ENCODE measurements at regions of chr11 and their contacts with region 1.

Region 1: DNA sequence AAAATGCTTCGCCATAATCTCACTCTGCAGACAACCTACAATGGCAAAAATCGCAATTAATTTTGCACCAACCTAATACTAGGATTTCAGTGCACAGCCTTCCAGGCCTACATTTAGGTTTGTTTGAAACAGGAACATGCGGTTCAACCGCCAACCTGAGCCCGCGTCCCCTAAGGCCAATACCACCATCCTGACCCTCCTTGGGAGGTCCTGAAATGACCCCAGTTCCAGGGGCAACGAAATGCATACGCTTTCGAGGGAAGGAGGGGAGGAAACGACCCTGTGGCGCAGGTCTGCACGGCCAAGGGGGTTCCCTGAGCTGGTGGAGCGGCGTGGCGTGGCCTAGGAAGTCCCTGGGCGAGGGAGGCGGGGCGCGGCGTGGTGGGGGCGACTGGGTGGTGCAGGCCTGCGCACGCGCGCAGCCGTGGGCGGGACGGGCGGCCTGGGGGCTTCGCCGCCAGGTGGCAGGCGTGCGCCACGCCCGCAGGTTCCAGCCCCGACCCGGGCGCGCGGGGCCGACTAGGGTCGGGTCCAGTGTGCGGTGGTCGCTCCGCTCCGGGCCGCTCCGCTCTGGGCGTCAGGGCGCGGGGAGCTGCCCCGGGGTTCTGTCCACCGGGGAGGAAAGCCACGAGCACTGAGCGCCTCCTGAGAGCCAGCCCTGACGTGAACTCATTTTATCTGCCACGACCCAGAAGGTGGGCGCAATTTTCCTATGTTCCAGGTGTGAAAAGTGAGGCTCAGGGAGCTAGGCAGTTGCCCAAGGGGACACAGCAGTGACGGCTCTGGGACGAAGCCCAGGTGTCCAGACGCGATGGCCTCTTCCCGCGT is 94.1 kb downstream of the SWAP70 start:
- DNase-seq: peak; percentile 89
- H3K4me3 ChIP-seq: peak overlapping the region; percentile 64 to 90
- H3K27ac ChIP-seq: peak overlapping the region; percentile 89 to 97
- H3K4me1 ChIP-seq: peaks cover 23% of the 10 kb centered on the region
- H3K27me3 ChIP-seq: no peaks in the 10 kb centered on the region
- CTCF ChIP-seq: peak; percentile 80 to 97 (median 88)
- POLR2A ChIP-seq: no peak

Region 2: GRCh38 chr11:9716275-9717039 is 41.6 kb before region 1 on chr11:
- intact Hi-C with region 1: no loop called
- DNase-seq: peak; percentile 27
- H3K4me3 ChIP-seq: no peak overlapping the region
- H3K27ac ChIP-seq: peak overlapping the region in 1 of 2 donors; percentile 53
- H3K4me1 ChIP-seq: peaks cover 14% of the 10 kb centered on the region
- H3K27me3 ChIP-seq: no peaks in the 10 kb centered on the region
- CTCF ChIP-seq: no peak
- POLR2A ChIP-seq: no peak

Region 3: GRCh38 chr11:9972989-9973388 is 215.0 kb after region 1 on chr11:
- intact Hi-C with region 1: loop called (anchors 10 kb)
- DNase-seq: peak; percentile 37
- H3K4me3 ChIP-seq: no peak overlapping the region
- H3K27ac ChIP-seq: no peak overlapping the region
- H3K4me1 ChIP-seq: no peaks in the 10 kb centered on the region
- H3K27me3 ChIP-seq: no peaks in the 10 kb centered on the region
- CTCF ChIP-seq: peak; percentile 29 to 60 (median 60)
- POLR2A ChIP-seq: no peak

Region 4: DNA sequence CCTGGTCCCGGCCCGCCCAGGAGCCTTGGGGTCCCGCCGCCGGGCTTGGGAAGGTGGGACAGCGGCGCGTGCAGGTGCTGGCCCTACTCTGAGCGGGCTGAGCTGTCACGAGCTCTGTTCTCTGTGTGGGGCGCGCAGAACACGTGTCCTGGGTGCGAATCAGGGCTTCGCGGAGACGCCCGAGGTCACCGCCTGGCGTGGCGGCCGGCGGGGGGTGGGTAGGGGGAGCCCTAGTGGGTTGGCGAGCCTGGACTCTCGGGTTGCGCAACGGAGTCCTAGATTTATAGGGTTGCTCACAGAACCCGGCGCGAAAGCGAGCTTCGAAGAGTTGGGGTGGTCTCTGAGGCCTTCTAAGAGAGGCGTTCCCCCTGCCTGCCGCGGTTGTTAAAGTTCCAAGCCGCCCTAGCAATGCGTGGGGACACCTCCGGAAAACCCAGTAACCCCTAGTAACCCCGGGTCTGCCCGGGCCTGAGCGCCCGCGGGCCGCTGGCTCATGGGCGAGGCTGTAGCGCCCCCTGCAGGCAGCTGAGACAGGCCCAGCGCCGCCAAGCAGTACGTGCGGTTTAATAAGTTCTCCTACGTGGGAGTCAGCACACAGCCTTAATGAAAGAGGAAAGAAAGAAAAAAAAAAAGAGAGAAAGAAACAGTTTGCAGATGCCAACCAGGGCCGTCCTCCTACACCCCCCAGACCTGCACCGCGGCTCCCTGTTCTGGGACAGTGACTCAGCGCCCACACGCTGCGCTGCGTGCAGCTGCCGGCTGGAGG is 549.6 kb after region 1 on chr11:
- intact Hi-C with region 1: loop called (anchors 5 kb)
- DNase-seq: peak; percentile 91
- H3K4me3 ChIP-seq: peak overlapping the region; percentile 46 to 66
- H3K27ac ChIP-seq: peak overlapping the region; percentile 59 to 71
- H3K4me1 ChIP-seq: peaks cover 54% of the 10 kb centered on the region
- H3K27me3 ChIP-seq: no peaks in the 10 kb centered on the region
- CTCF ChIP-seq: peak; percentile 96 to 98 (median 98)
- POLR2A ChIP-seq: no peak